ENCODE measurements at regions of chr1 and their contacts with region 1.

Region 1: GRCh38 chr1:1374929-1375662 is at the start of gene AURKAIP1:
- DNase-seq: peak; percentile 98
- H3K4me3 Mint-ChIP-seq: peak within 1 kb of the TSS; percentile 87
- H3K27ac Mint-ChIP-seq: peak within 1 kb of the TSS; percentile 90
- H3K4me1 Mint-ChIP-seq: peaks cover 18% of the 10 kb centered on the region
- H3K27me3 Mint-ChIP-seq: no peaks in the 10 kb centered on the region
- total RNA-seq, gene AURKAIP1: 124 to 131 TPM

Region 2: DNA sequence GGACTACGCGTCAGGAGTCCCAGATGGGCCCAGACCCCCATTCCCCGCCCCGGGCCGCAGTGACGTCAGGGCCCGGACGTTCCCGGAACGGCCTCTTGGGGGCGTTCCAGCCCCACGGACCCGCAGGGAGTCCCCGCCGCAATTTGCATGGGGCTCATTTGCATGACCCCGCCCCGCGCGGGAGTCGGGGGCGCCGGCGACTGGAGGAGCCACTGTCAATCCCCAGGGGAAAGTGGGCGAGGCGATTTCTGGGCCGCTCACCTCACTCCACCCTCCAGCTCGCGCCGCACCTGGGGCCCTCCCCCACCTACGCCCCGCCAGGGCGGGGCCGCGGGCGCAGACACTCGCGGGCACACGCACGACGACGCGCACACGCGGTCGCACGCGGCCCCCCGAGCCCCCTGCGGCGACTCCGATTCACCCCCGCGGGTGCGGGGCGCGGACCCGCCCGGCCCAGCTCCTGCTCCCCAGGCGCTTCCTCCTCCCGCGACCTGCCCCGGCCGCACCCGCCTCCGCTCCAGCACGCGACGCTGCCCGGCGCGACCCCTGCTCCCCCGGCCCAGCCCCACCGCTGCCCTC is 342.0 kb before region 1 on chr1:
- CTCF ChIA-PET with region 1: interaction called, 6 read pairs
- POLR2A ChIA-PET with region 1: no interaction called
- intact Hi-C with region 1: loop called (anchors 10 kb)
- DNase-seq: peak; percentile 95
- H3K4me3 Mint-ChIP-seq: no peak overlapping the region
- H3K27ac Mint-ChIP-seq: no peak overlapping the region
- H3K4me1 Mint-ChIP-seq: peaks cover 7% of the 10 kb centered on the region
- H3K27me3 Mint-ChIP-seq: peaks cover 26% of the 10 kb centered on the region

Region 3: GRCh38 chr1:1349256-1350012 is 25.7 kb before region 1 on chr1 and contains the start of gene DVL1:
- CTCF ChIA-PET with region 1: interaction called, 10 read pairs
- POLR2A ChIA-PET with region 1: interaction called, 6 read pairs
- intact Hi-C with region 1: loop called (anchors 1 kb)
- DNase-seq: peak; percentile 72
- H3K4me3 Mint-ChIP-seq: peak within 1 kb of the TSS; percentile 74
- H3K27ac Mint-ChIP-seq: no peak within 1 kb of the TSS
- H3K4me1 Mint-ChIP-seq: peaks cover 22% of the 10 kb centered on the region
- H3K27me3 Mint-ChIP-seq: peaks cover 25% of the 10 kb centered on the region
- total RNA-seq, gene DVL1: 37.6 to 38.6 TPM

Region 4: DNA sequence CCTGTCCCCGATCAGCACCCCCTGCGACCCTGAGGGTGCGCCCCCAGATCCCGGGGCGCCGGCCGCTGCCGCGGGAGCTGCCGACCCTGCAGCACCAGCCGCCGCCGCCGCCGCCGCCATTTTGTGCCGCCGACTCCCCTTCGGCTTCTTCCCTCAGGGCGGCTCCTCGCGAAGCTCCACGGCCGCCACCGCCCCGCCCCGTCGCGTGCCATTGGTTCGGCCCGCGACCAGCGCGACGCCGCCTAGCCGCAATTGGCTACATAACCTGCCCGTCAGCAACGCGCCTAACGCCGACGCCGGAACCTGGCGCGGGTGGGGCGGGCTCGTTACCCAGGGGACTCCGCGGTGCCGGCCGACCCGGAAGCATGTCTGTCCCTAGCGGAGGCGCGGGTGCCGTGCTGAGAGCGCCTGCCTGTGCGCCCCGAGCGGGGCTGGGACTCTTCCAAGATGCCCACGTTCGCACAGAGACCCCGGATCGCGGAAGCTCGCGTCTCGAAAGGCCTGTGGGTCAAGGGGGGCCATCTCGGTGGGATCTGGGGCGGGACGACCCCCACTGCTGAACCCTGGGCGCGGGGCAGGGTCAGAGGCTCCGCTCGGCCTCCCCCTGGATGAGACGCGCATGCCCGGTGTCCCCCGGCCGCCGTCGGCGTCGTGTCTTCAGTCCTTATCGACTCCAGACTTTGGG is 24.2 kb after region 1 on chr1 and contains the start of gene CCNL2:
- CTCF ChIA-PET with region 1: interaction called, 21 read pairs
- POLR2A ChIA-PET with region 1: interaction called, 16 read pairs
- intact Hi-C with region 1: loop called (anchors 1 kb)
- DNase-seq: peak; percentile 100
- H3K4me3 Mint-ChIP-seq: peak within 1 kb of the TSS; percentile 89
- H3K27ac Mint-ChIP-seq: peak within 1 kb of the TSS; percentile 90
- H3K4me1 Mint-ChIP-seq: peaks cover 56% of the 10 kb centered on the region
- H3K27me3 Mint-ChIP-seq: no peaks in the 10 kb centered on the region
- total RNA-seq, gene CCNL2: 96.0 to 108 TPM

Region 5: GRCh38 chr1:1406817-1407635 is 31.9 kb after region 1 on chr1 and contains the start of gene MRPL20:
- CTCF ChIA-PET with region 1: interaction called, 5 read pairs
- POLR2A ChIA-PET with region 1: interaction called, 3 read pairs
- intact Hi-C with region 1: loop called (anchors 2 kb)
- DNase-seq: peak; percentile 98
- H3K4me3 Mint-ChIP-seq: peak within 1 kb of the TSS; percentile 93
- H3K27ac Mint-ChIP-seq: peak within 1 kb of the TSS; percentile 94
- H3K4me1 Mint-ChIP-seq: peaks cover 48% of the 10 kb centered on the region
- H3K27me3 Mint-ChIP-seq: no peaks in the 10 kb centered on the region
- total RNA-seq, gene MRPL20: 122 to 123 TPM

Region 6: DNA sequence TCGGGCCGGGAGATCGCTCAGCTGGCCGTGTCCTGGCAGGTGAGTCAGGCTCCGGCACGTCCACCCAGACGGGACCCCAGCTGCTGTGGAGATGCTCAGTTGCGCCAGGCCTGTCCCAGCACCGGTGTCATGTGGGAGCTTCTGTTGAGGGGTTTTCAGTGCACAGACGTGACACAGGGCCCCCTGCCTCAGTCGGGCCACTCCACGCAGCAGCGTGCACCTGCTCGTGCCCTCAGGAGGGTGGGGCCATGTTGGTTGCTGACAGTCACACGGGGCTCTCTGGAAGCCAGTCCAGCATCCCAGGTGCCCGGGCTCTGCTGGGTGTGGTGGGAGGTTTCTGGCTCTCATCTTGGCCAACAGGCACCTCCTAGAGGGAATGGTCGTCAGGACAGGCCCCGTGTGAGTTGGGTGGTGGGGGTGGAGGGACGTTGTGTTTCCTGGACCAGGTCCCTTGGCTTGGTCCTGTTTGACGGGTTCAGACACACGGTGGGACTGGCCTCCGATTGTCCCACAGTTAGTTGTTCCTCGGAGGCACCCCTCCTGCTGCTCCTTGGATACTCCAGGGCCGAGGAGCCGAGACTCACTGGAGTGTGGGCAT is 115.6 kb after region 1 on chr1:
- CTCF ChIA-PET with region 1: no interaction called
- POLR2A ChIA-PET with region 1: no interaction called
- intact Hi-C with region 1: no loop called
- DNase-seq: no peak
- H3K4me3 Mint-ChIP-seq: no peak overlapping the region
- H3K27ac Mint-ChIP-seq: no peak overlapping the region
- H3K4me1 Mint-ChIP-seq: no peaks in the 10 kb centered on the region
- H3K27me3 Mint-ChIP-seq: no peaks in the 10 kb centered on the region

Region 7: GRCh38 chr1:1615256-1616044 is 240.4 kb after region 1 on chr1 and contains the start of gene MIB2:
- CTCF ChIA-PET with region 1: interaction called, 3 read pairs
- POLR2A ChIA-PET with region 1: no interaction called
- intact Hi-C with region 1: loop called (anchors 1 kb)
- DNase-seq: peak; percentile 97
- H3K4me3 Mint-ChIP-seq: peak within 1 kb of the TSS; percentile 90
- H3K27ac Mint-ChIP-seq: peak within 1 kb of the TSS; percentile 90
- H3K4me1 Mint-ChIP-seq: peaks cover 18% of the 10 kb centered on the region
- H3K27me3 Mint-ChIP-seq: no peaks in the 10 kb centered on the region
- total RNA-seq, gene MIB2: 31.1 to 36.1 TPM

Measured in activated CD4-positive, alpha-beta memory T cell treated with anti-CD3 and anti-CD28 coated beads for 36 hours (primary cell).